ENCODE measurements at regions of chr2 and their contacts with region 1.

Region 1: DNA sequence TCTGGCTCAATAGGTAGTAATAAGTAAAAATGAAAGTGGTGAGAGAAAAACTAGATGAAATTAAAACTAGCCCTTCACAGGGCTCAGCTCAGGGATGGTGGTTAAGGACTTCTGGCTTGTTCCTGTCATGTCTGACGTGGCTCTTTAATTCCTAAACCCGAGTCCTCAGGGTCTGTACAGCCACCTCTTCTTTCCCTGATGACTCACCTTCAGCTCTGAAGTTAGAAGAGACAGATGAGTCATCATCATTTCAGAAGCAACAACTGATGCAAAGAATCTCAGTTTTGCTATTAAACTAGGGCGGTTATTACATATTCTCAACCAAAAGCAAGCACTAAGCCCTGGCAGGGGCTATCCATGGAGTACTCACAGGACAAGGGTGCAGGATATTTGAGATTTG is 24.0 kb upstream of the ITGB6 start:
- DNase-seq: no peak
- H3K4me3 Mint-ChIP-seq: no peak overlapping the region
- H3K27ac Mint-ChIP-seq: peak overlapping the region; percentile 76
- H3K4me1 Mint-ChIP-seq: peaks cover 45% of the 10 kb centered on the region
- H3K27me3 Mint-ChIP-seq: peaks cover 10% of the 10 kb centered on the region

Region 2: DNA sequence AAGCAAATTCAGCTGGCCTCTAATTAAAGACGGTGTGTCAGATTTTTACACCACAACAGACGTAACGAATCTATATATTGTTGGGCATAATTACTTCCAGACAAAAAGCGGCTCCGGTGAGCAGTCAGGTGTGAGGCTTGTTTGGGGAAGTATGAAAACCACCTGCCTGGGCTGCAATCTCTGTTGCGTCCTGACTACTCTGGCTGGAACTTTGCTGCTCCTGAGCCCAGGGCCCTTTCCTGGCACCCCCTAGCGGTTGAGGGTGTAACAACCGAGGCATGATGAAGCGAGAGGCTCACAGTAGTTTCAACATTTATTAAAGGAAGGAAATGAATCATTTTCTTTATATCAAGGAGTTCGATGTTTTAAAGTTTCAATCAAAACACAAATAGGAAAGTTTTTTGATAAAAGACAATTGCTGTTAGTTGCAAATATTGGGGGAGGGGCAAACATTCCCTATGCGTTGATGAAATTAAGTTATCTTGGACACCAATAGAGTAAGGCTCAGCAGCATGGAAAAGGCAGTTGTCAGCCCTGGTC is 13.4 kb before region 1 on chr2:
- intact Hi-C with region 1: loop called (anchors 1 kb)
- DNase-seq: peak; percentile 53
- H3K4me3 Mint-ChIP-seq: no peak overlapping the region
- H3K27ac Mint-ChIP-seq: no peak overlapping the region
- H3K4me1 Mint-ChIP-seq: peaks cover 18% of the 10 kb centered on the region
- H3K27me3 Mint-ChIP-seq: peaks cover 24% of the 10 kb centered on the region

Region 3: DNA sequence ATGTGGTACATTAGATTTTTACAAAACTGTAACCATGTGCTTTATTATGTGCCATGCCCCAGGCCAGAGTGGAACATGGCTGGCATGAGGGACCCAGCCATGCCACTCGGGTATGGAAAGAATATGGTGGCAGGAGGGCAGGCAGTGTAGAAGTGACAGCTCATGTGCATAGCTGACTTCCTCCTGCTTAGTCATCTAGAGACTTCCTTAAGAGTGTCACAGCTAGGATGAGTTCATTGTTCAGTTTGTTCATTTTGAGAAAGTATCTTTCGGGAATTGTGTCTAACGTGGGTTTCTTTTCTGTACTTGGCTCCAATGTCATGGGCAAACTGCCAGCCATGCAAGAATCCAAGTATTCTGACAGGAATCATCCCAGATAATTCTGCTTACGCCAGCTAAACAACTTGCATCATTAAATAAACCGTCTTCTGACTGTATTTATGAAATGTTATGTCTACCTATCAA is 70.3 kb after region 1 on chr2:
- intact Hi-C with region 1: loop called (anchors 2 kb)
- DNase-seq: no peak
- H3K4me3 Mint-ChIP-seq: no peak overlapping the region
- H3K27ac Mint-ChIP-seq: no peak overlapping the region
- H3K4me1 Mint-ChIP-seq: peaks cover 48% of the 10 kb centered on the region
- H3K27me3 Mint-ChIP-seq: no peaks in the 10 kb centered on the region

Region 4: GRCh38 chr2:160417745-160418397 is 193.8 kb after region 1 on chr2:
- intact Hi-C with region 1: loop called (anchors 5 kb)
- DNase-seq: no peak
- H3K4me3 Mint-ChIP-seq: no peak overlapping the region
- H3K27ac Mint-ChIP-seq: peak overlapping the region; percentile 85
- H3K4me1 Mint-ChIP-seq: peaks cover 61% of the 10 kb centered on the region
- H3K27me3 Mint-ChIP-seq: no peaks in the 10 kb centered on the region

Region 5: DNA sequence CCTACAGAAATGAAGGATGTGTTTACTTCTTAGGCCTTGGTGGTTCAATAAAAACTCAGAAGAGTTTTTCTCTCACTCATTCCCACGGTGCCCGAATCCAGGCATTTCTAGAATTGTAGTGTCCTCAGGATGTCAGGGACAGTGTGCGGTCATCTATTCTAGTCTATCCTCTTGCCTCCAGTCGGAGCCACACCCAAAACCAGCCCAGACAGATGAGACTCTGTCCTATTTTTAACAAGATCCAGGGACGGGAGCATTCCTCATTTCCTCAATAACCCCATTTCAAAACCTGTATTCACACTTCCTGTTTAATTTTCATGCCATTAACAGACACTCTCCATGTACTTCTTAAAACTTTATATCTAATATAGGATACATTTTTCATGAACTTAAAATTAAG is 281.2 kb after region 1 on chr2:
- intact Hi-C with region 1: loop called (anchors 5 kb)
- DNase-seq: no peak
- H3K4me3 Mint-ChIP-seq: no peak overlapping the region
- H3K27ac Mint-ChIP-seq: no peak overlapping the region
- H3K4me1 Mint-ChIP-seq: peaks cover 21% of the 10 kb centered on the region
- H3K27me3 Mint-ChIP-seq: peaks cover 18% of the 10 kb centered on the region

Region 6: GRCh38 chr2:161166538-161167409 is 942.7 kb after region 1 on chr2:
- intact Hi-C with region 1: loop called (anchors 5 kb)
- DNase-seq: peak; percentile 58
- H3K4me3 Mint-ChIP-seq: peak overlapping the region; percentile 34
- H3K27ac Mint-ChIP-seq: peak overlapping the region; percentile 87
- H3K4me1 Mint-ChIP-seq: peaks cover 84% of the 10 kb centered on the region
- H3K27me3 Mint-ChIP-seq: no peaks in the 10 kb centered on the region

Measured in activated T-helper 2 cell treated with anti-CD3 and anti-CD28 coated beads, Interferon-gamma antibody, Interleukin-2, Interleukin-4, amounts not matched to agents 10 μg/mL and 5 μg/mL and 100 μg/mL, durations not matched to agents 14 hours and 24 hours and 36 hours (primary cell).